ENCODE measurements at regions of chr1 and their contacts with region 1.

Region 1: DNA sequence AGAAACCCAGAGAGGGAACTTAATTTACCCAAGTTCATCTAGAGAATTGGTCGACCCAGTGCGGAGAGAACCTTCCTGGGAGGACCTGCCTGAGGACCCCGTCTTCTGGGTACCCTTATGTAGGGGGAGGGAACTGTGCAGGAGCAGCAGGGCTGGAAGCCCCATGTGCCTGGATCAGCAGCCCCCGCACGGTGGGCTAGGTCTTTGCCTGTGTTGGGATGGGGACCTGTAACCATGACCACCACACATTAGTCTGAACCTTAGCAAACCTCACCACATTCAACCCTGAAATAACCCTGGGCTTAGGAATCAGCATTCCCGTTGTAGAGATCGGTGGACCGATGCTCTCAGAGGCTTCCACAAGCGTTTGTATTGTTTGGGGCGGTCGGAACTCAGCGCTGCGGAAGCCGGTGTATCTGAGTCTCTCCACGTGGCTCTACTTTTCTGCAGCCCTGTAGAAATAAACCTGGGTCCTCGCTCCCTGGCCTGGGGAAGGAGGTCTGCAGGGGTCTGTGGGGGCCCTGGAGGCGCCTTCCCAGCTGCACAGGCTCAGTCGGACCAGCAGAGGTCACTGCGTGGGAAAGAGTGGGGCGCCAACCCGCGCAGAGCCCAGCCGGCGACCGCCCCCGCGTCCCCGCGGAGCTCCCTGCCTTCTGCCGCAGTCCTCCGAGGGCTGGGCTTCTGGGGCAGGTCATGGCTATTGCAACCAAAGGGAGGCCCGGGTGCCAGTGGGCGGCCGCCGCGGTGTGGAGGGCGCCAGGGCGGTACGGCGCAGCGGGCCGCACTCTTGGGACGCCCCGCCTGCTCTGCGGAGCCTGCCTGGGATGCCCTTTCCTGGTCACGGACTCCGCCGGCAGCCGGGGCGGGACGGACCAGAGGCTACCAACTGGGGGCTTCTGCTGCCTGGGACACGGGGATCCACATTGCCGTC is 36.2 kb upstream of the KCNA10 start:
- DNase-seq: peak; percentile 31 to 84 (median 62)
- ATAC-seq: peak; percentile 93 to 98 (median 97)
- H3K4me3 ChIP-seq: peak overlapping the region in 3 of 4 donors; percentile 26 to 39 (median 29)
- H3K27ac ChIP-seq: no peak overlapping the region
- H3K4me1 ChIP-seq: no peaks in the 10 kb centered on the region
- H3K27me3 ChIP-seq: peaks cover 0 to 7% (median 0%) of the 10 kb centered on the region in 4 donors
- CTCF ChIP-seq: peak; percentile 65 to 82 (median 72)

Region 2: GRCh38 chr1:110612065-110612751 is 57.1 kb after region 1 on chr1:
- intact Hi-C with region 1: loop called in 2 of 3 experiments (anchors 5 kb)
- DNase-seq: peak in 1 of 6 donors; percentile 19
- ATAC-seq: peak; percentile 19 to 45 (median 33)
- H3K4me3 ChIP-seq: no peak overlapping the region
- H3K27ac ChIP-seq: no peak overlapping the region
- H3K4me1 ChIP-seq: no peaks in the 10 kb centered on the region
- H3K27me3 ChIP-seq: peaks cover 0 to 3% (median 0%) of the 10 kb centered on the region in 4 donors
- CTCF ChIP-seq: no peak

Region 3: GRCh38 chr1:110619412-110620249 is 64.5 kb after region 1 on chr1:
- intact Hi-C with region 1: loop called in 2 of 3 experiments (anchors 5 kb)
- DNase-seq: peak; percentile 73 to 95 (median 84)
- ATAC-seq: peak; percentile 92 to 96 (median 94)
- H3K4me3 ChIP-seq: peak overlapping the region in 2 of 4 donors; percentile 7 to 19
- H3K27ac ChIP-seq: peak overlapping the region in 3 of 4 donors; percentile 2 to 42 (median 6)
- H3K4me1 ChIP-seq: no peaks in the 10 kb centered on the region
- H3K27me3 ChIP-seq: peaks cover 0 to 3% (median 0%) of the 10 kb centered on the region in 4 donors
- CTCF ChIP-seq: peak; percentile 95 to 98 (median 97)